ENCODE measurements at regions of chr1 and their contacts with region 1.

Region 1: GRCh38 chr1:7975212-7975865 is 13.8 kb downstream of the PARK7 start:
- DNase-seq: no peak
- H3K4me3 ChIP-seq: no peak overlapping the region
- H3K27ac ChIP-seq: peak overlapping the region; percentile 46 to 75 (median 71)
- H3K4me1 ChIP-seq: peaks cover 3 to 32% (median 26%) of the 10 kb centered on the region in 4 donors
- H3K27me3 ChIP-seq: no peaks in the 10 kb centered on the region
- CTCF ChIP-seq: peak; percentile 87 to 96 (median 91)
- EP300 ChIP-seq: no peak
- POLR2A ChIP-seq: no peak

Region 2: GRCh38 chr1:7783826-7784491 is 191.4 kb before region 1 on chr1 and contains the start of gene PER3:
- intact Hi-C with region 1: no loop called
- DNase-seq: peak; percentile 99
- H3K4me3 ChIP-seq: peak within 1 kb of the TSS; percentile 69 to 84 (median 78)
- H3K27ac ChIP-seq: peak within 1 kb of the TSS; percentile 93 to 99 (median 96)
- H3K4me1 ChIP-seq: peaks cover 18 to 55% (median 55%) of the 10 kb centered on the region in 4 donors
- H3K27me3 ChIP-seq: no peaks in the 10 kb centered on the region
- CTCF ChIP-seq: peak in 1 of 3 experiments; percentile 19
- EP300 ChIP-seq: no peak
- POLR2A ChIP-seq: no peak
- total RNA-seq, gene PER3: 25.8 to 45.8 (median 42.6) TPM

Region 3: DNA sequence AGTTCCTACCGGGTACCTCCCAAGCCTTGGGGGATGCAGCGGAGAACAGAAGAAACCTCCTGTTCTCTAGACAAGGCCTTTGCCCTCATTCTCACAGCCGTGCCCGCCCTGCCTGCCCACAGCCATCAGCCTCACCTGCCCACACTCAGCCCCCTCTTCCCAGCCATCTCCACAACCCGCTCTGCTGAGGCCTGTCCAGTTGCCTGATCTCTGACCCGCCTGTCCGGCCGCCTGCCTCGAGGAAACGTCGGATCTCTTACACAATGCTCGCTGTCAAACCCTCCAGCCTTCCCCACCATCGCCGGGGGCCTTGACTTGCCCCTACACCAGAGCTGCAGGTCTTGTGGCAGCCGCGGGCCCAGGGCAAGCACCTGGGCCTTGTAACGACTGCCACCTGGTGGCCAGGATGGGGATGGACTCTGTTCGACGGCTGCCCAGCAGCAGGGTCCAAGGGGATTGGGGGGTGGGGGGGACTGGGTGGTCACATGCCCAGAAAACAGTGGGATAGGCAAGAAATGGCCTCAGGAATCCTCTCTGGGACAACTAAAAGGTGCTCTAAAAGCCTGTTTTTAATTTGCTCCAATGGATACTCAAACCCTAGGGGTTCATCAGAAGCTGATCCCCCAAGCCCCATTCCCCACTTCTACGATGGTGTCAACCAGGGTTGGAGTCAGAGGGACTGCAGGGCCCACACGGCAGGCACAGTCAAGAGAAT is 373.6 kb after region 1 on chr1:
- intact Hi-C with region 1: loop called (anchors 2 kb)
- DNase-seq: no peak
- H3K4me3 ChIP-seq: no peak overlapping the region
- H3K27ac ChIP-seq: peak overlapping the region in 3 of 4 donors; percentile 6 to 79 (median 70)
- H3K4me1 ChIP-seq: peaks cover 58 to 72% (median 65%) of the 10 kb centered on the region in 4 donors
- H3K27me3 ChIP-seq: no peaks in the 10 kb centered on the region
- CTCF ChIP-seq: peak; percentile 85 to 95 (median 94)
- EP300 ChIP-seq: peak; percentile 44
- POLR2A ChIP-seq: no peak

Region 4: GRCh38 chr1:8448911-8449661 is 473.7 kb after region 1 on chr1:
- intact Hi-C with region 1: loop called (anchors 10 kb)
- DNase-seq: no peak
- H3K4me3 ChIP-seq: peak overlapping the region in 2 of 4 donors; percentile 10 to 34
- H3K27ac ChIP-seq: peak overlapping the region; percentile 52 to 66 (median 62)
- H3K4me1 ChIP-seq: peaks cover 0 to 39% (median 22%) of the 10 kb centered on the region in 4 donors
- H3K27me3 ChIP-seq: no peaks in the 10 kb centered on the region
- CTCF ChIP-seq: no peak
- EP300 ChIP-seq: no peak
- POLR2A ChIP-seq: no peak